ENCODE measurements at regions of chr2 and their contacts with region 1.

Region 1: GRCh38 chr2:239326831-239327535 is 73.8 kb downstream of the HDAC4 start:
- DNase-seq: peak; percentile 89
- ATAC-seq: peak; percentile 85
- H3K4me3 Mint-ChIP-seq: peak overlapping the region; percentile 17
- H3K27ac Mint-ChIP-seq: peak overlapping the region; percentile 74
- H3K4me1 Mint-ChIP-seq: peaks cover 75% of the 10 kb centered on the region
- H3K27me3 Mint-ChIP-seq: peaks cover 5% of the 10 kb centered on the region

Region 2: DNA sequence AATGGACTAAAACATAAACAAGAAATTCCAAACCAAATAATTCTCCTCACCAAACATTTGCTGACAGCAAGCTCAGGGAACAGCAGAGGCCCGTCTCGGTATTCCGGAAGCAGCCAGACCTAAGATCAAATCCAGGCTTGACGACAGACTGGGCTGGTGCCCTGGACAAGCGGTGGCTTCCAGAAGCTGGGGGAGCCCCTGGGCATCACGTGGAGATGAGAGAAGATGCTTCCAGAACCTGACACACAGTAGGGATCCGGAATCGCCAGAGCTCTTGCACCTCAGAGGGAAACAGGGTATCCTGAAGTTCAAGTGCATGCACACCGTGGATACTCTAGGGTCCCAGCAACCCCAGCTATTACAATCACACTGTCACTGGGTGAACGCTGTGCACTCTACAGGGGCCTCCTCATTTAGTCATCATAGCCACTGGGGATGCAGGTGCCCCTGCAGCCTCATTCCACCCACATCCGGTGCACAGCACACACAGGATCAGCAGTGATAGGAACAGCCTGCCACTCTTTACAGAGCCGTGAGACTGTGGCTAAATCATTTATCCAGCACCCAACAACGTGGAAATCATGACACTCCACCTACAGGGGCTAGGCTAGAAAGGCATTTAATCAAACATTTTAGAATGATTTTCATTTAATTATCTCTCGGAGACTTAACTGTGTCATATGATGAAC is 28.7 kb before region 1 on chr2:
- CTCF ChIA-PET with region 1: interaction called, 5 read pairs
- POLR2A ChIA-PET with region 1: interaction called, 5 read pairs
- intact Hi-C with region 1: loop called in 1 of 2 experiments (anchors 2 kb)
- DNase-seq: peak; percentile 86
- ATAC-seq: peak; percentile 91
- H3K4me3 Mint-ChIP-seq: peak overlapping the region; percentile 63
- H3K27ac Mint-ChIP-seq: peak overlapping the region; percentile 75
- H3K4me1 Mint-ChIP-seq: peaks cover 71% of the 10 kb centered on the region
- H3K27me3 Mint-ChIP-seq: peaks cover 8% of the 10 kb centered on the region

Region 3: GRCh38 chr2:239308661-239309397 is 18.2 kb before region 1 on chr2:
- CTCF ChIA-PET with region 1: no interaction called
- POLR2A ChIA-PET with region 1: no interaction called
- intact Hi-C with region 1: no loop called
- DNase-seq: peak; percentile 4
- ATAC-seq: no peak
- H3K4me3 Mint-ChIP-seq: no peak overlapping the region
- H3K27ac Mint-ChIP-seq: no peak overlapping the region
- H3K4me1 Mint-ChIP-seq: peaks cover 15% of the 10 kb centered on the region
- H3K27me3 Mint-ChIP-seq: no peaks in the 10 kb centered on the region

Region 4: GRCh38 chr2:239369631-239370161 is 42.7 kb after region 1 on chr2:
- CTCF ChIA-PET with region 1: interaction called, 3 read pairs
- POLR2A ChIA-PET with region 1: interaction called, 4 read pairs
- intact Hi-C with region 1: loop called (anchors 1 to 2 kb)
- DNase-seq: peak; percentile 91
- ATAC-seq: peak; percentile 97
- H3K4me3 Mint-ChIP-seq: peak overlapping the region; percentile 70
- H3K27ac Mint-ChIP-seq: peak overlapping the region; percentile 90
- H3K4me1 Mint-ChIP-seq: peaks cover 8% of the 10 kb centered on the region
- H3K27me3 Mint-ChIP-seq: no peaks in the 10 kb centered on the region

Region 5: DNA sequence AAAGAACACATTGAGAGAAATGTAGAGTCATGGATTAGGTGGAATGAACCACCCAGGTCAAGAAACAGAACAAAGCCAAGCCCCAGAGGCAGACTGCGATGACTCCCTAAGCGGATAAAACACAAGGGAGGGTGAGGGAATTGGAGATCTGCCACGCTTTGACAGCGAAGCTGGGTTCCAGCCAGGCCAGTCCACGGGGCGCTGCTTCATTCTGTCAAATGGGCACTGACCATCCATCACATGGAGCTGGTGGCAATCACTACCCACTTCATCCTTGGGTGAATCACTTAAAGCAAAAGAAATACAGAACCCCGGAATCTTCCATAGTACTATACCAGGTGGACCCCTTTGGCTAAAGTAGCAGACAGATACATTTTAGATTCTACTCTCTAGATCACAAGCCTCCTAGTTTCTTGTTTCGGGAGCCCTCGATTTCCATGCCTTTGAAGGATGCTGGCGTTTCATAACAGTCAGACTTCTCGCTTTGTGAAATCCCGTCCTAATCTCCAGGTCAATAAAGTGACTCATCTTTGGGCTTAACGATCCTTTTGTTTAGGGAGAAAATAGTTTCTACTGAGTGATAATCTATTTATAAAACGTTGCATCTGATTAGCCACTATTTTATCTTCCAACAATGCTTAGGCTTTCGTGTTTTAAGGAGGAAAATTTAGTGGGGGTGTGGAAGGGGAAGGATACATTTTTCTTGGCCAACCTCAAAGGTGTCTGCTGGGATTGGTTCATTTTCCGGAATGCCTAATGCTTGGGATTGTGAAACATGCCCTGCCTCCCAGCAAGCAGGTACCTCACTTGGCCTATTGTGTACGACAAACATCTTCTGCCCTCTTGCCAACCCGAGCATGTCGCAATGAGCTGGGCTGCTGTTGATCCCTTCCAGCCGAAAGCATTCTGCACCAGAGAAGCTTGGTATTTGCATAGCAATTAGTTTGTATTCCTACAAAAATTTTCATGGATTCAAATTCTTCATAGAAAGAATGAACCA is 117.9 kb after region 1 on chr2:
- CTCF ChIA-PET with region 1: no interaction called
- POLR2A ChIA-PET with region 1: no interaction called
- intact Hi-C with region 1: no loop called
- DNase-seq: no peak
- ATAC-seq: no peak
- H3K4me3 Mint-ChIP-seq: no peak overlapping the region
- H3K27ac Mint-ChIP-seq: no peak overlapping the region
- H3K4me1 Mint-ChIP-seq: peaks cover 12% of the 10 kb centered on the region
- H3K27me3 Mint-ChIP-seq: peaks cover 21% of the 10 kb centered on the region

Region 6: DNA sequence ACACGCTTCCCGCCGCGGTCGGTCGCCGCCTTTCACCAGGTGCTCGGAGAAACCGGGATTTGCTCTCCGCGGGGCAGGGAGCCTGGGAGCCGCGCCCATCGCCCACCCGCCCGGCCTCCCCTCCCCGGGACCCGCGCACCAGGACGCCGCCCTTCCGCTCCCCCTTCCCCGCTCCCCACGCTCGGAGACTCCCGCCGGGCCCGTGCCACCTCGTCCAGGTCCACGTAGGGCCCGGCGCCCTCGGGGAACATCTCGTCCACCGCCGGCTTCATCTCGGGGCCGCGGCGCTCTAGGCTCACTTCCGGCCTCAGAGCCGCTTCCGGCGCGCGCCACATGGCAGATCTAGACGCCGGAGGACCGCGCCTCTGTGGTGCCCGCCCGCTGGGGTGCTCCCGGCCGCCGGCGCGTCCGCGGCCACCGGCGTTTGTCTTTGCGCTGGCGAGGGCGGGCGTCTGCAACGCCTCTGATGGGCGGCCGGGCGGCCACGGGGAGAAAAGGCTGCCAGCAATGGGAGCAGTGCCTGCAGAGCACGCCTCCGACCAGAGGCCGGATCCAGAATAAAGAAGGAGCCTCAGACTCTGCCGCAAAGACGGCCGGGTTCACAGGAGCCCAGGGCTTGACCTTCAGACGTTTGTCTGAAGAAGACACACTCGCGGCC is 809.2 kb after region 1 on chr2 and contains the start of gene COPS9:
- CTCF ChIA-PET with region 1: no interaction called
- POLR2A ChIA-PET with region 1: no interaction called
- intact Hi-C with region 1: loop called in 1 of 2 experiments (anchors 5 kb)
- DNase-seq: peak; percentile 93
- ATAC-seq: peak; percentile 96
- H3K4me3 Mint-ChIP-seq: peak within 1 kb of the TSS; percentile 88
- H3K27ac Mint-ChIP-seq: peak within 1 kb of the TSS; percentile 91
- H3K4me1 Mint-ChIP-seq: peaks cover 25% of the 10 kb centered on the region
- H3K27me3 Mint-ChIP-seq: no peaks in the 10 kb centered on the region
- total RNA-seq, gene COPS9: 62.6 to 92.1 TPM

Measured in activated CD4-positive, alpha-beta T cell treated with anti-CD3 and anti-CD28 coated beads for 36 hours (primary cell).